ENCODE measurements at regions of chr10 and their contacts with region 1.

Region 1: DNA sequence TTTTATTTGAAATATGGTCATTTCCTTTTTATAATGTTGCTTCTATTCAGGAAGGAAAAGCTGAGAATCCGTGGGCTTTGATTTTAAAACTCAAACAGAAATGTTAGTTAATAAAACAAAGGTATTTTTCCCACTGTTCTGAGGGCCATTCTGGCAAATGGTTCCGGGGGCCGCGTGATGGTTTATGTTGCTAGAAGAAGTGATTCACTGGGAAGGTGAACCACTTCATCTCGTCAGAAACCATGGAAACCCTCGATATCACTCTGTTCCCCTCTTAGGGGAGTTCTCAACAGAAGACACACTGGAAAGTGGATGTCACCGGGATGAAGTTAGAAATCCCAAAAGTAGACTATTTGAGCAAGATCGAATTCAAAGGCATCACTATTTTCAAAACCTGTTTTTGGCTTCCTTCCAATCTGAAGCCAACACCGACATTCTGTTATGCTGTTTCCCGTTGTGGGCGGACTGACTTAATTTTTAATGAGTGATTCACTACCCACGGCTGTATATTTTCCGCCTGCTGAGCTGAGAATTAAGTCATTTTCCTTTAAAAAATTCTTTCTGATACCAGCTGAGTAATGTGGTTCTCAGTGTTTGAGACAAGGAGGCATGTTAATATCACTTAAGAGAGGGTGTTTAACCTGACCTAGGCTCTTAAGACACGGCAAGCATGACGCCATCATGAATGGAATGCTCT is 84.1 kb downstream of the PTPRE start:
- DNase-seq: peak; percentile 77
- H3K4me3 Mint-ChIP-seq: peak overlapping the region; percentile 55
- H3K27ac Mint-ChIP-seq: peak overlapping the region; percentile 93
- H3K4me1 Mint-ChIP-seq: peaks cover 40% of the 10 kb centered on the region
- H3K27me3 Mint-ChIP-seq: no peaks in the 10 kb centered on the region

Region 2: GRCh38 chr10:127293640-127294039 is 697.4 kb before region 1 on chr10:
- intact Hi-C with region 1: no loop called
- DNase-seq: peak; percentile 92
- H3K4me3 Mint-ChIP-seq: peak overlapping the region; percentile 52
- H3K27ac Mint-ChIP-seq: peak overlapping the region; percentile 56
- H3K4me1 Mint-ChIP-seq: peaks cover 32% of the 10 kb centered on the region
- H3K27me3 Mint-ChIP-seq: peaks cover 31% of the 10 kb centered on the region

Region 3: GRCh38 chr10:127906548-127907377 is 84.2 kb before region 1 on chr10 and contains the start of gene PTPRE:
- intact Hi-C with region 1: loop called (anchors 5 kb)
- DNase-seq: peak; percentile 91
- H3K4me3 Mint-ChIP-seq: peak within 1 kb of the TSS; percentile 46
- H3K27ac Mint-ChIP-seq: no peak within 1 kb of the TSS
- H3K4me1 Mint-ChIP-seq: no peaks in the 10 kb centered on the region
- H3K27me3 Mint-ChIP-seq: peaks cover 48% of the 10 kb centered on the region
- total RNA-seq, gene PTPRE: 33.6 and 35.8 TPM in 2 replicates

Region 4: DNA sequence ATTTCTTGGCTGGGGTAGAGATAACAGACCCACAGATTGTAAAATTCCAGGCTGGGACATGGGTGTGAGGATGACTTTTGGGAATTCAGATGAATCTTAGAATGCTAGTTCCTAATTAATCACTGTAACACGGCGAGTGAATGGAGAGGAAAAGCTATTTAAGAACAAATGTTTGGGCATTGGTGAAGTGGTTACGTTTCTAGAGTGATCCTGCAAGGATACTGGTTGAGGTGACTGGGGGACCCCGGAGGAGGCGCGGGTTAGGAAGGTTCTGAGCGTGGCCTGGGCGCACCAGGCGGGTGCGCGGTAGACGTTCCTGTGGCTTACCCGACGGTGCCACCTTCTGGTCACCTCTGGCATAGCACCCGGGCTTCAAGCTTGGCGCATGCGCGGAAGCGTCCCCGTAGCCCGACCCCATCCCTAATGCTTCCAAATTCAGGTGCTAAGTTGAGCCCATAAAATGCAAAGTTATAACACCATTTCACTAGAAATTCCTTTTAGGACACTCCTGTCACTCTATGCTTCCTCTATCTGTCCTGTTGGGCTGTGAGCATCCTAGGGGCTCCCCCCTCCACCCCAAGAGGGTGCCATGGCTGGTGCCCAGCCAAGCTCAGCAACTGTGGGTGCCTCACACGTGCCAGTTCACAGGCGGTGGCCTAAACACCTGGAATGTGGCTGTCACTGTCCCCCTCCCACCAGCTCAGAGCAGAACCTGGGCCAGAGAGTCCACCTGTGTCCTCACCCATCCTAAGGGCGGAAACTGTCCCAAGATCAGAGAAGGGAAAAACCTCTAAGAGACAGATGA is 20.4 kb after region 1 on chr10:
- intact Hi-C with region 1: loop called (anchors 1 kb)
- DNase-seq: peak; percentile 97
- H3K4me3 Mint-ChIP-seq: peak overlapping the region; percentile 49
- H3K27ac Mint-ChIP-seq: no peak overlapping the region
- H3K4me1 Mint-ChIP-seq: peaks cover 10% of the 10 kb centered on the region
- H3K27me3 Mint-ChIP-seq: peaks cover 10% of the 10 kb centered on the region

Region 5: GRCh38 chr10:128047351-128047750 is 56.4 kb after region 1 on chr10:
- intact Hi-C with region 1: loop called (anchors 1 kb)
- DNase-seq: peak; percentile 96
- H3K4me3 Mint-ChIP-seq: peak overlapping the region; percentile 86
- H3K27ac Mint-ChIP-seq: peak overlapping the region; percentile 90
- H3K4me1 Mint-ChIP-seq: peaks cover 48% of the 10 kb centered on the region
- H3K27me3 Mint-ChIP-seq: no peaks in the 10 kb centered on the region

Region 6: GRCh38 chr10:128064108-128064969 is 73.3 kb after region 1 on chr10:
- intact Hi-C with region 1: loop called (anchors 1 kb)
- DNase-seq: peak; percentile 85
- H3K4me3 Mint-ChIP-seq: peak overlapping the region; percentile 77
- H3K27ac Mint-ChIP-seq: peak overlapping the region; percentile 96
- H3K4me1 Mint-ChIP-seq: peaks cover 57% of the 10 kb centered on the region
- H3K27me3 Mint-ChIP-seq: no peaks in the 10 kb centered on the region

Region 7: DNA sequence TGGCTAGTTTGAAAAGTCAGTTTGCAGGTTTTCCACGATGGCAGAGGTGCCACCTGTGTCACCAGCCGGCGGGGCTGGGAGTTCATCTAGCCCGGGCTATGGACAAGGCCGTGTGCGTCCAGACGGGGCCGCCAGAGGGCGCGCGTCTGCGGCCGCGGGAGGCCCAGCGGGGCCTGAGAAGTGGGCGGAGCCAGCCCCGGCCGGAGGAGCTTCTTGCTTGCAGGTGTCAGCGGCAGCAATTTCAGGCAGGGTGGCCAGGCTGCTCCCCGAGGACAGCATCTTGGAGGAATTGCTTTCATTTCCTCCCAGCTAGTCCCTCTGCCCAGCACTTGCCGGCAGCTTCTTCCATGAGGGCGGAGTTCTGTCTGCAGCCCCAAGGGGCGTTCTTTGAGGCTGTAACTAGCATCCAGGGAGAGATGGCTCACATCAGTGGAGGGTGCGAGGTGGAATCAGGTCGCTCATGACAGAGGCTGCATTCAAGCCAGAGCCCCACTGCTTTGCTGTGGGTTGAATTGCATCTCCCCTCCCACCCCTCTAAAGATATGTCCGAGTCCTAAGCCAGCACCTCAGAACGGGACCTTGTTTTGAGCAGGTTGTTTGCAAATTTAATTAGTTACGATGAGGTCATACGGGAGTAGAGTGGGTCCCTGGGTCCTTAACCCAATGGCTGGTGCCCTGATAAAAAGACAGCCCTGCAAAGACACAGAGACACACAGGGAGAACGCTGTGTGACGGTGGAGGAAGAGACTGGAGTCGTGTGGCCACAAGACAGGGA is 221.1 kb after region 1 on chr10:
- intact Hi-C with region 1: loop called (anchors 2 kb)
- DNase-seq: peak; percentile 97
- H3K4me3 Mint-ChIP-seq: peak overlapping the region; percentile 81
- H3K27ac Mint-ChIP-seq: peak overlapping the region; percentile 84
- H3K4me1 Mint-ChIP-seq: peaks cover 9% of the 10 kb centered on the region
- H3K27me3 Mint-ChIP-seq: peaks cover 13% of the 10 kb centered on the region

Measured in activated CD4-positive, alpha-beta T cell treated with anti-CD3 and anti-CD28 coated beads, Interleukin-2, amount 10 ng/mL, durations not matched to agents 24 days and 14 days (primary cell).